Testis (tissue), 5 donors: ENCODE measurements at regions of chr17 and their contacts with region 1.

Region 1: GRCh38 chr17:45284176-45285140 is 22.6 kb upstream of the SPATA32 start:
- DNase-seq: no peak
- H3K4me3 ChIP-seq: no peak overlapping the region
- H3K27ac ChIP-seq: no peak overlapping the region
- H3K4me1 ChIP-seq: peaks cover 6% of the 10 kb centered on the region
- H3K27me3 ChIP-seq: no peaks in the 10 kb centered on the region
- CTCF ChIP-seq: peak in 1 of 3 experiments; percentile 8
- POLR2A ChIP-seq: no peak

Region 2: DNA sequence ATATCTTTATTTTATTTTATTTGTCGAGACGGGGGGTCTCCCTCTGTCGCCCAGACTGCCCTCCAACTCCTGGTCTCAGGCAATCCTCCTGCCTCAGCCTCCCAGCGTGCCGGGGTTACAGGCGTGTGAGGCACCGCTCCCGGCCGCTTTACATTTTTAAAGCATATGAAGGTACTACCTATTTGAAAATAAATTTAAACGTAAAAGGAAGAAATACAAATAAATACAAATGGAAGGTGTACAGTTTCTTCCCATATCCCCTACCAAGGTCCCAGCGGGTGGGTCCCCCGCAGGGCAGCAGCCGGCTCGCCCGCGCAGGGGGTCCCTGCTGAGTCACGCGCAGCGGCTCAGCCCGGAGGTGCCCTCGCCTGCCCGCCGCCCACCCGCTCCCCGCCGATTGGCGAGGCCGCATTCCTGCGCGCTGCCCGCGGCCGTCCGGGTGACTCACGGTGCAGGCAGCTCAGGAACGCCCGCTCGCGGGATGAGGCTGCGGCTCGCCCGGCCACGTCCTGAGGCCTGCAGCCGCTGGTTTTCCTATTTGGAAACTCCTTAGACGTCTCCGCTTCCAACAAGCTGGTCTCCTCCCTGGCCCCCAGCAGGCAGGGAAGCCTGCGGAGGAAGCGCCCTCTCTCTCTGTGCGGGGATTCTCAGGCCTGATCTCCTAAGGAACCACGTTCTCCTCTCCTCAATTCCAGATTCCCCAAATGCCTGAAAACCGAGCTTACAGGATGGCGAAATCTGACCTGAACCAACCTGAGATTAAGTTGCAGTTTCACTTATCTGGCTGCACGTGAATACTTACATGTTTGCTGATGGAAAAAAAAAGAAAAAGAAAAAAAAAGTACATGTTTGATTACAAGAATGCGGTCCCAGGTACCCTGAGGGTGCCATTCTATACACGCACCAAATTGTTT is 87.2 kb after region 1 on chr17:
- intact Hi-C with region 1: loop called (anchors 10 kb)
- DNase-seq: peak; percentile 73
- H3K4me3 ChIP-seq: peak overlapping the region; percentile 36 to 55
- H3K27ac ChIP-seq: peak overlapping the region; percentile 65 to 73
- H3K4me1 ChIP-seq: peaks cover 19% of the 10 kb centered on the region
- H3K27me3 ChIP-seq: no peaks in the 10 kb centered on the region
- CTCF ChIP-seq: no peak
- POLR2A ChIP-seq: no peak

Region 3: DNA sequence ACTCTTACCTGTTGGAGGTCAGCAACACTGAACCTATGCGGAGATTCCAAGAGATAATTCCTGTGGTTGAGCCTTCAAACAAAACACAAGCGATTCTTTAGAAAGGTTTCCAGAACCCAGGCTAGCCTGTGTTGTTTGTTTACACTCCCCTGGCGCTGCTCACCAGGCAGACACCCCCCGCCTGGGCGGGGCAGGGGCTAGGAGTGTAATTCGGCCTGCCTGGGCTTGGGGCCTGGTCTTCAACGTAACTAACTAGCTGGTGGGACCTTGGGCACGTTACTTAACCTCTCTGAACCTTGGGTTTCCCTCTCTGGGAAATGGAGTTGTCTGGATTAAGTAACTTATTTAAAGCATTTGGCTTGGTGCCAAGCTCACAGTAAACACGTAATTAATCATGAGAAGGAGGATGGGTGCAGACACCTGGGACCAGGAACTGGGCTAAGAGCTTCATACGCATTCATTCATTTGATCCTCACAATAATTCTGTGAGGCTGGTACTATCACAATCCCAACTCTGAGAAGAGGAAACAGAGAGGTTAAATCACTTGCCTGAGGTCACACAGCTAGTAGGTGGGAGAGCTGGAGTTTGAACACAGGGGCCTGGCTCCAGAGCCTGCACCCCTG is 155.8 kb after region 1 on chr17:
- intact Hi-C with region 1: no loop called
- DNase-seq: no peak
- H3K4me3 ChIP-seq: no peak overlapping the region
- H3K27ac ChIP-seq: no peak overlapping the region
- H3K4me1 ChIP-seq: no peaks in the 10 kb centered on the region
- H3K27me3 ChIP-seq: no peaks in the 10 kb centered on the region
- CTCF ChIP-seq: no peak
- POLR2A ChIP-seq: no peak

Region 4: GRCh38 chr17:46121841-46122485 is 837.5 kb after region 1 on chr17:
- intact Hi-C with region 1: no loop called
- DNase-seq: no peak
- H3K4me3 ChIP-seq: no peak overlapping the region
- H3K27ac ChIP-seq: no peak overlapping the region
- H3K4me1 ChIP-seq: peaks cover 22% of the 10 kb centered on the region
- H3K27me3 ChIP-seq: no peaks in the 10 kb centered on the region
- CTCF ChIP-seq: no peak
- POLR2A ChIP-seq: no peak